Adrenal gland (tissue), 19 donors: ENCODE measurements at regions of chr2 and their contacts with region 1.

Region 1: DNA sequence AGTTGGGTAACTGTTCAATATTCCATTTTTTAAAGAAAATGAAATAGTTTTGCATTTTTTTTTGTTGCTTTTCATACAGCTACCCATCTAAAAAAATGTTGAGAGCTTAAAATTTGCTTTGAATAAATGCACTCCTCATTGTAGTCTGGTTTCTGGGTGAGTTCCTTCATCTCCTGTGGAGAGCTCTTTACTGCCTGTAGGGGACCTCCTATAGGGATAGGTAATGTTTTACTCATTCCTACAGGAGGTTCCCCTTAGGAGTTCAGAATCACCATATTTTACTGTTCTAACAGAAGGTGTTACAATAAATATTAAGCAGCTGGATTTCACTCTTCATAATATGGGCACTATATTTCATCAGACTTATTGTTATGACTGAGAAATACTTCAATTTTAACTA is 947.3 kb upstream of the CRIM1 start:
- DNase-seq: no peak
- H3K4me3 ChIP-seq: no peak overlapping the region
- H3K27ac ChIP-seq: no peak overlapping the region
- H3K4me1 ChIP-seq: no peaks in the 10 kb centered on the region
- H3K27me3 ChIP-seq: no peaks in the 10 kb centered on the region
- CTCF ChIP-seq: no peak
- POLR2A ChIP-seq: no peak

Region 2: GRCh38 chr2:34096562-34097171 is 1311.7 kb before region 1 on chr2:
- intact Hi-C with region 1: loop called in 1 of 2 experiments (anchors 5 kb)
- DNase-seq: peak in 6 of 7 donors; percentile 38 to 75 (median 62)
- H3K4me3 ChIP-seq: no peak overlapping the region
- H3K27ac ChIP-seq: no peak overlapping the region
- H3K4me1 ChIP-seq: no peaks in the 10 kb centered on the region
- H3K27me3 ChIP-seq: no peaks in the 10 kb centered on the region
- CTCF ChIP-seq: peak; percentile 48 to 83 (median 71)
- POLR2A ChIP-seq: no peak